ENCODE measurements at regions of chr5 and their contacts with region 1.

Region 1: GRCh38 chr5:144142139-144142823 is 28.2 kb downstream of the YIPF5 start:
- DNase-seq: peak; percentile 12
- ATAC-seq: peak; percentile 96
- H3K4me3 ChIP-seq: no peak overlapping the region
- H3K27ac ChIP-seq: no peak overlapping the region
- H3K4me1 ChIP-seq: no peaks in the 10 kb centered on the region
- H3K27me3 ChIP-seq: peaks cover 9% of the 10 kb centered on the region; the same call in 1 of the 2 replicates
- CTCF ChIP-seq: peak; percentile 27 to 60 (median 59); a peak in 5 of 6 replicates
- POLR2A ChIP-seq: no peak
- RAD21 ChIP-seq: peak; percentile 70

Region 2: DNA sequence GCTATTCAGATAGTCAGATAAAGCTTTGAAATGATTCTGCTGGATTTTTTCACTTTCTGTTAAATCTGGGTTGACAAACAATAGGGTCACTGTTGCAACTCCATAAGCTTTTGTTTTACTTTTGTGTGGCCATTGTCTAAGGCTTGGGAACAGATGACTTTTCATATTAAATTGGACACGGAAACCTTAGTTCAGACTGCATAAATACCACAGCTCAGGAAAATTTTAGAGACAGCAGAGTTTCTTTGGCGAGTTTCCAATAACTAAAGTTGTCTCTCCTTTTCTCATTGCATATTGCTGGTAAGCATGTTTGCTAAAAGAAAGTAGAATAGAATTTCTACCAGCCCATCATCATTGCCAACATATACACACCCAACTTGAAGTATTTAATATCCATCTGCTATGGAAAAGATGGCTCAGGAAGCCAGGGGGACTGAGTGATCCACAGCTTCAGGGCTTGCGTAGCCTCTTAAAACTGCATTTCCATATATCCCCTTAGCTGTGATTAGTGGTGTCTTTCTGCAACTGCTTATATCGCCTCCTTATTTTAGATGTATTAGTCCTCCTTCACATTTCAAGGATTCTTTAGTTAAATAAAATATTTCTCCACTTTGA is 1203.9 kb before region 1 on chr5:
- CTCF ChIA-PET with region 1: no interaction called
- POLR2A ChIA-PET with region 1: no interaction called
- RAD21 ChIA-PET with region 1: no interaction called
- intact Hi-C with region 1: no loop called
- DNase-seq: no peak
- ATAC-seq: no peak
- H3K4me3 ChIP-seq: no peak overlapping the region
- H3K27ac ChIP-seq: no peak overlapping the region
- H3K4me1 ChIP-seq: no peaks in the 10 kb centered on the region
- H3K27me3 ChIP-seq: no peaks in the 10 kb centered on the region
- CTCF ChIP-seq: no peak
- POLR2A ChIP-seq: no peak
- RAD21 ChIP-seq: no peak

Region 3: DNA sequence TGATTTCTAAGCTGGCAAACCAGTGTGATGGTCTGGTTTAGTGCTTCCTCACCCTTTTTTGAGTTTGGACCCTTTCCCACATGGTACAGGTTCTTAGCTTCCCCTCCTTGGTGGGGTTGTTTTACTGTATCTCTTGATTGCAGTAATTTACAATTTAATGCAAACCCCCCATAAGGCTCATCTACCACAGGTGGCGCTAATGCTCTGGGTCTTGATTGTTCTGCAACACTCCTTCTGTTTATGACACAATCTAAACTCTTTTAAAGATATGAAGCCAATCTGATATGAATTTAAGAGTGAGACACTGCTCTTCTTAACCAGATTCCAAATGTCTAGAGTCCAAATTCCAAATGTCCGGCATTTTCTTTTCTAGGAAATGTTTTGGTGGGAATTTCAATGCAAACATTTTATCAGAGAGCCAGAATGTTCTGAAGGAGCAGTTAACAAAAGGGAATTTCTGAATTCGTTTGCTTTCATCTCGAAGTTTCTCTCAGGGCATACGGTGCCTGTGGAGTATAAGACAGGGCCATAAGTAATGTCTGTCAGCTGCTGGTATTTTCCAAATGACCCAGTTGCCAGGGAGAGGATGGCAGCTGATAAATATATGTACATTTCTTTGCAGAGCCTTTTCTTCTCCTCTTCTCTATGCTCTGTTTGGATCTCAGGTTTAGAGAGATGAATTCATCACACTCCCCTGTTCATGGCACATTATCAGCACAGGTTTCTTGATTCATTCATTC is 1125.3 kb before region 1 on chr5:
- CTCF ChIA-PET with region 1: no interaction called
- POLR2A ChIA-PET with region 1: no interaction called
- RAD21 ChIA-PET with region 1: no interaction called
- intact Hi-C with region 1: loop called (anchors 10 kb)
- DNase-seq: no peak
- ATAC-seq: peak; percentile 73
- H3K4me3 ChIP-seq: no peak overlapping the region
- H3K27ac ChIP-seq: no peak overlapping the region
- H3K4me1 ChIP-seq: no peaks in the 10 kb centered on the region
- H3K27me3 ChIP-seq: no peaks in the 10 kb centered on the region
- CTCF ChIP-seq: peak; percentile 51 to 80 (median 66); a peak in 5 of 6 replicates
- POLR2A ChIP-seq: no peak
- RAD21 ChIP-seq: peak; percentile 86

Region 4: DNA sequence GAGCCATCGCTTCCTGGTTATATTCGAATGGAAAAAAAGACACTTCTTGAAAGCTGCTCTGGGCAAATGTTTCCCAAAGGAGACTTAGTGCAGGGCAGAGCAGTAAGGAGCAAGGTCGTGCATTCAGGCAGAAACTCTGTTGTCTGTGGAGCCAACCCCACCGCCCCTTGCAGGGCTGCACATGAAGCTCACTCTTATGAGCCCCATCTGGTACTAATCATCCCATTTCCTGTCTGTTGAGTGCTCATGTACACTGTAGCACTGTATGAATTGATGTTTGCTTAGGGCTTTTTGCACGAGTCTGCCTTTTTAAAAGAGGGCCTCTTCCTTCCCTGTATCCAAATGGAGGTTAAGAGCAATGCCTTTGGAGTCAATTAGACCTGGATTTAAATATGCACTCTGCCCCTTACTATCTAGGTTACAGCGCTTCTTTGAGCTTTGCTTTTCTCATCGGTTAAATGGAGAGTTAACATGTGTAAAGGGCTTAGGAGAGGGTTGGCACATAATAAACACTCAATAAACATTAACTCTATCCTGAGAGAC is 304.9 kb before region 1 on chr5:
- CTCF ChIA-PET with region 1: no interaction called
- POLR2A ChIA-PET with region 1: no interaction called
- RAD21 ChIA-PET with region 1: no interaction called
- intact Hi-C with region 1: loop called (anchors 10 kb)
- DNase-seq: no peak
- ATAC-seq: no peak
- H3K4me3 ChIP-seq: no peak overlapping the region
- H3K27ac ChIP-seq: no peak overlapping the region
- H3K4me1 ChIP-seq: no peaks in the 10 kb centered on the region
- H3K27me3 ChIP-seq: no peaks in the 10 kb centered on the region
- CTCF ChIP-seq: no peak
- POLR2A ChIP-seq: no peak
- RAD21 ChIP-seq: no peak

Region 5: DNA sequence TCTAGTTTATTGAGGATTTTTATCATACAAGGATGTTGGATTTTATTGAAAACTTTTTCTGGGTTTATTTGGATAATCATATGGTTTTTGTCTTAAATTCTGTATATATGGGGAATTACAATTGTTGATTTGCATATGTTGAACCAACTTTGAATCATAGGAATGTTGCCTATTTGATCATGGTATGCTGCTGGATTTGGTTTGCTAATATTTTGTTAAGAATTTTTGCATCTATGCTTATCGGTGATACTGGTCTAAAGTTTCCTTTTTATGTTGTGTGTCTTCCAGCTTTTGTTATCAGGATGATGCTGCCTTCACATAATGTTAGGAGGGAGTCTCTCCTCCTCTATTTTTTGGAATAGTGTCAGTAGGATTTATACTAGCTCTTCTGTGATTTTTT is 947.8 kb after region 1 on chr5:
- CTCF ChIA-PET with region 1: no interaction called
- POLR2A ChIA-PET with region 1: no interaction called
- RAD21 ChIA-PET with region 1: no interaction called
- intact Hi-C with region 1: no loop called
- DNase-seq: no peak
- ATAC-seq: no peak
- H3K4me3 ChIP-seq: no peak overlapping the region
- H3K27ac ChIP-seq: no peak overlapping the region
- H3K4me1 ChIP-seq: no peaks in the 10 kb centered on the region
- H3K27me3 ChIP-seq: peaks cover 10% of the 10 kb centered on the region; the same call in 1 of the 2 replicates
- CTCF ChIP-seq: no peak
- POLR2A ChIP-seq: no peak
- RAD21 ChIP-seq: no peak

Measured in HCT116 (cell line).